ENCODE measurements at regions of chr10 and their contacts with region 1.

Region 1: GRCh38 chr10:15433850-15434537 is 62.9 kb upstream of the FAM171A1 start:
- DNase-seq: peak; percentile 46
- ATAC-seq: peak; percentile 81
- H3K4me3 ChIP-seq: peak overlapping the region; percentile 42
- H3K27ac ChIP-seq: no peak overlapping the region
- H3K4me1 ChIP-seq: no peaks in the 10 kb centered on the region
- H3K27me3 ChIP-seq: peaks cover 3% of the 10 kb centered on the region
- CTCF ChIP-seq: peak; percentile 74
- POLR2A ChIP-seq: no peak
- RAD21 ChIP-seq: peak; percentile 63

Region 2: DNA sequence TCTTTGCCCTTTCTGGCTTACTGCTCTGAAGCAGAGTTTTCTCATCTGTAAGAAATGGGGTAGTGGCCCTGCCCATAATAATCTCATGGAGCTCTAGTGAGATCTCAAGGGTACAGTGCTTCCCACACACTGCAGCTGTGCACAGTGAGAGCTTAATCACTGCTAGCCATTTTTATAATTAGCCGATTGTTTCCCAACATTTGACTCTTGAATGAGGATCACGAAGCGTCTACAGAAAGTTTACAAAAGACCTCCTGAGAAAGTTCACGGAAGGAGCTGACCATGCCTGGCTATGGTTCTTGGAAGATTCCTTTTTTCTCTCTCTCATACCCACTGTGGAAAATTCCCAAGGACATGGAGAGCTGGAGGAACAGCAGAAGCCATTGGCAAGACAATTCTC is 133.3 kb before region 1 on chr10:
- CTCF ChIA-PET with region 1: no interaction called
- POLR2A ChIA-PET with region 1: no interaction called
- dilution Hi-C with region 1: no loop called
- in situ Hi-C with region 1: no loop called
- intact Hi-C with region 1: no loop called
- DNase-seq: no peak
- ATAC-seq: no peak
- H3K4me3 ChIP-seq: no peak overlapping the region
- H3K27ac ChIP-seq: no peak overlapping the region
- H3K4me1 ChIP-seq: no peaks in the 10 kb centered on the region
- H3K27me3 ChIP-seq: no peaks in the 10 kb centered on the region
- CTCF ChIP-seq: no peak
- POLR2A ChIP-seq: no peak
- RAD21 ChIP-seq: no peak

Region 3: DNA sequence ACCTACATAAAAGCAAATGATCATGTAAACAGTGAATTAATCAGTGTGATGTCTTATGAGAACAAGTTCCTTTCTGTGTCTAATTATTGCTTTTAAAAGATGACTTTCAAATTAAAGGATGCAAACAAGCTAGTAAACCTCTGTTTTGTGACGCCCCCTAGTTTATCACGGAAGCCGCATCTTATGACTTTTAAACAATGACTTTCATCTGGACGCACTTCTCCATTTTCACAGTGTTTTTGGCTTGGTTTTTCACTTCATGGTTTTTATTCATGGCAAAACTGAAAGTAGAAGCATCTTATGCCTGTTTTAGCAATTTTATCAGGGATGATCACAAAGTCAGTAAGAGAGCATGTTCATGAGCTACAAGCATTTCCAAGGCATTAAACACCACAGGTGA is 250.8 kb after region 1 on chr10:
- CTCF ChIA-PET with region 1: interaction called, 10 read pairs
- POLR2A ChIA-PET with region 1: no interaction called
- dilution Hi-C with region 1: no loop called
- in situ Hi-C with region 1: no loop called
- intact Hi-C with region 1: no loop called
- DNase-seq: no peak
- ATAC-seq: no peak
- H3K4me3 ChIP-seq: no peak overlapping the region
- H3K27ac ChIP-seq: no peak overlapping the region
- H3K4me1 ChIP-seq: no peaks in the 10 kb centered on the region
- H3K27me3 ChIP-seq: peaks cover 5% of the 10 kb centered on the region
- CTCF ChIP-seq: no peak
- POLR2A ChIP-seq: no peak
- RAD21 ChIP-seq: no peak

Region 4: DNA sequence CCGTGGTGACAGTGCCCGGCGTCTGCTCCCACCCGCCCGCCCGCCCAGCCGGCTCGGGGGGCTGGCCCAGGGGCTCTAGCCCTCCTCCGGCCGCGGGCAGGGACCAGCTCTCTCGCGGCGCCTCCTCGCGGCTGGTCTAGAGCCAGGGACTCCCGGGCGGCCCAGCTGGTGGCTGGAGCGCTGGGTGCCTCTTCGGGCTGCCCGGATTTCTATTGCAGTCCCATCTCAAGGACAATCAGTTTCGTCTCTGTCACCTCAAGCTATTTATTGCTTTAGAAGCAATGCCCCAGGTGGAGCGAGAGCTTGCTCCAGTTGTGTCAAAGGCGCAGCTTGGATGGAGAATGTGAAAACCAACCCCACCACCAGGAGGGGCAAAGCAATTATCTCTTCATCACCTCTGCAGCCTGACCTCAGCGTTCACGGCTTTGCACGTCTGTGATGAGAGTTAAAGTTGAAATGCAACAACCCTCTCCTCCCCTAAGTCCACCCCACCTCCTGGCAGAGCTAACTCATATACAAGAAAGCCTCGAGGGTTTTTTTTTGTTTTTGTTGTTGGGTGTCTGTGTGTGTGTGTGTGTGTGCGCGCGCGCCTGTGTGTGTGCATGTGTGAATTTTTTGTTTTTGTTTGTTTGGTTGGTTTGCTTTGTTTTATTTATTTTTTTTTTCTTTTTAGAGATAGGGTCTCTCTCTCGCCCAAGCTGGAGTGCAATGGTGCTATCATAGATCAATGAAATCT is 286.1 kb after region 1 on chr10 and contains the start of gene ITGA8:
- CTCF ChIA-PET with region 1: interaction called, 28 read pairs
- POLR2A ChIA-PET with region 1: no interaction called
- dilution Hi-C with region 1: no loop called
- in situ Hi-C with region 1: loop called (anchors 5 kb)
- intact Hi-C with region 1: loop called (anchors 1 kb)
- DNase-seq: no peak
- ATAC-seq: peak; percentile 64; the same call in 1 of the 2 replicates
- H3K4me3 ChIP-seq: peak within 1 kb of the TSS; percentile 24; the same call in 1 of the 2 replicates
- H3K27ac ChIP-seq: no peak within 1 kb of the TSS
- H3K4me1 ChIP-seq: no peaks in the 10 kb centered on the region
- H3K27me3 ChIP-seq: peaks cover 43% of the 10 kb centered on the region
- CTCF ChIP-seq: 0 out of 2 replicates have a peak, but pooled peaks have one; percentile 6
- POLR2A ChIP-seq: no peak
- RAD21 ChIP-seq: no peak
- total RNA-seq, gene ITGA8: under 0.01 TPM in 2 replicates

Region 5: GRCh38 chr10:15725603-15726002 is 291.6 kb after region 1 on chr10:
- CTCF ChIA-PET with region 1: interaction called, 28 read pairs
- POLR2A ChIA-PET with region 1: no interaction called
- dilution Hi-C with region 1: no loop called
- in situ Hi-C with region 1: loop called (anchors 5 kb)
- intact Hi-C with region 1: loop called (anchors 1 kb)
- DNase-seq: peak; percentile 67
- ATAC-seq: peak; percentile 90
- H3K4me3 ChIP-seq: no peak overlapping the region
- H3K27ac ChIP-seq: no peak overlapping the region
- H3K4me1 ChIP-seq: no peaks in the 10 kb centered on the region
- H3K27me3 ChIP-seq: peaks cover 21% of the 10 kb centered on the region
- CTCF ChIP-seq: peak; percentile 76
- POLR2A ChIP-seq: no peak
- RAD21 ChIP-seq: peak; percentile 69

Region 6: GRCh38 chr10:15824498-15824897 is 390.5 kb after region 1 on chr10:
- CTCF ChIA-PET with region 1: no interaction called
- POLR2A ChIA-PET with region 1: no interaction called
- dilution Hi-C with region 1: no loop called
- in situ Hi-C with region 1: loop called (anchors 5 kb)
- intact Hi-C with region 1: loop called (anchors 1 kb)
- DNase-seq: peak; percentile 44
- ATAC-seq: peak; percentile 79
- H3K4me3 ChIP-seq: no peak overlapping the region
- H3K27ac ChIP-seq: no peak overlapping the region
- H3K4me1 ChIP-seq: no peaks in the 10 kb centered on the region
- H3K27me3 ChIP-seq: no peaks in the 10 kb centered on the region
- CTCF ChIP-seq: peak; percentile 56
- POLR2A ChIP-seq: no peak
- RAD21 ChIP-seq: peak; percentile 54

Measured in IMR-90 (cell line).